Activated T-helper 2 cell treated with anti-CD3 and anti-CD28 coated beads, Interferon-gamma antibody, Interleukin-2, Interleukin-4, amounts not matched to agents 10 μg/mL and 5 μg/mL and 100 μg/mL, durations not matched to agents 14 hours and 24 hours and 36 hours (primary cell): ENCODE measurements at regions of chr17 and their contacts with region 1.

Region 1: GRCh38 chr17:16987830-16988601 is 16.1 kb upstream of the TNFRSF13B start:
- DNase-seq: peak; percentile 68
- H3K4me3 Mint-ChIP-seq: no peak overlapping the region
- H3K27ac Mint-ChIP-seq: peak overlapping the region; percentile 79
- H3K4me1 Mint-ChIP-seq: peaks cover 31% of the 10 kb centered on the region
- H3K27me3 Mint-ChIP-seq: no peaks in the 10 kb centered on the region

Region 2: DNA sequence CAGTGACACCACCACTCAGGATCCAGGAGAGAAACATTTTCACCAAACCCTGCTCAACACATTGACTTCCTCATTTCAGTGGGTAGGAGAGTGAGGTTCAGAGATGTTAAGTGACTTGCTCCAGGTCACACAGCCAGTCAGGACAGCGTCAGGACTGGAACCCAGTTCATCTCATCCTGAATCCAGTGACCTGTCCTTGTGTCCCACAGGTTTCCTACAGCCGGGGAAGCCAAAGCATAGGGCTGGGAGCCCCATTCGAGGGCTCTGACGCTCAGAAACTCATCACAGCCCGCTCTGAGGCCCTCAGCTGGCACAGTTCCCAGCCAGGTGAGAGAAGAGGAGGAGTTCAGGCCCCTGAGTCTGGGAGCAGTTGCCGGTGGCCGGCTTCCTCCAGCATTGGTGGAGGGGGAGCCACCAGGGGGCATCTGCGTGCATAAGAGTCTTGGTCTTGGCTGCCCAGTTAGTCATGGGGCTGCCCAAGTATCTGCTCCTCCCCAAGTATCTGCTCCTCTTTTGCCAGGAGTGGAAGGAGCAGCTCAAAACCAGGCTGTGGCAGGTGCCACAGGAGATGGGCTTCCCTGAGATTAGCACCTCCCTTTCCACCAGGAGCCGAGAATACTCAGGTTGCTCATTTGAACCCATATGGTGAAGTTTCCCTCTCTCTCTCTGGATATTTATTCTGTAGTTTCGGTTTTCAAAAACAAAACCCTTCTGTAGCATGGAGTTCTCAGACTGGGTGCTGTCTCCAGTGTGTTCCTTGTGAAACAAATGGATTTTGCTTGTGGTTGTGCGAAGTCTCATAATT is 72.1 kb before region 1 on chr17:
- intact Hi-C with region 1: loop called (anchors 2 kb)
- DNase-seq: no peak
- H3K4me3 Mint-ChIP-seq: no peak overlapping the region
- H3K27ac Mint-ChIP-seq: no peak overlapping the region
- H3K4me1 Mint-ChIP-seq: no peaks in the 10 kb centered on the region
- H3K27me3 Mint-ChIP-seq: peaks cover 24% of the 10 kb centered on the region

Region 3: GRCh38 chr17:17119533-17119932 is 131.5 kb after region 1 on chr17:
- intact Hi-C with region 1: no loop called
- DNase-seq: peak; percentile 53
- H3K4me3 Mint-ChIP-seq: no peak overlapping the region
- H3K27ac Mint-ChIP-seq: peak overlapping the region; percentile 84
- H3K4me1 Mint-ChIP-seq: peaks cover 48% of the 10 kb centered on the region
- H3K27me3 Mint-ChIP-seq: no peaks in the 10 kb centered on the region